Naive thymus-derived CD4-positive, alpha-beta T cell (primary cell): ENCODE measurements at regions of chr1 and their contacts with region 1.

Region 1: DNA sequence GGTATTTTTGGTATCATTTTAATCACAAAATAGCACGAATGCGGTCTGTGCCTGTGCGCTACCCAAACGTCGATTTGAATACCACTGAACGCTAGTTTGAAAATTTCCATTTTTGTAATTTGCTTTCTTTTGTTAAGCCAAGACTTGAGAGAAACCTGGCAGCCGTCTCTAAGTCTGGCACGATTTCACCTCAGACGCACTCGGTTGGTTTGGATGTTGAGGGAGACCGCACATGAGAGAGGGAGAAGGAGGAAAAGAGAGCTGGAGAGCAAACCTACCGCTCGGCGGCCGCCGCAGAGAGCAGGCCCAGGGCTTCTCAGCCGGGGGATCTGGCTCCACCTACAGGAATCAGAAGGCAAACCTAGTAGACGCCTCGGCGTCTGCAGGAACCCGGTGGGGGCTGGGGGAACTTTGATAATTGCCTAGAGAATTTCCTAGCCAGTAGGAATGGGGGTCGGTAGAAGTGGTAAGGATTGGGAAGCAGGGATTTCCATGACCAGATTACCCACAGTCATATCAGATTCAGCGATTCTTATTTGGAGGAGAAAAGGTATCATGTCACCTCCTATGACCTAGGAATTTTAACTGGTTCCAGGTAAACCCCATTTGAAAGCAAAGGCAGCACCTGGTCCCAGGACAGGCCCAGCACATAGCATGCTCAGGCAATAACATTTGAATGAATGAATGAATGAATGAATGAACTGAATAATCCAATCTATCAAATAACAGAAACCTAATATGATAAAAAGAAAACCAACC is 83.2 kb downstream of the TM2D1 start:
- DNase-seq: peak; percentile 41 to 72 (median 53)
- ATAC-seq: peak; percentile 93
- H3K4me3 ChIP-seq: peak overlapping the region; percentile 36
- H3K4me3 Mint-ChIP-seq: peak overlapping the region; percentile 47 to 92 (median 84)
- H3K27ac ChIP-seq: no peak overlapping the region
- H3K27ac Mint-ChIP-seq: peak overlapping the region in 6 of 9 donors; percentile 69 to 91 (median 82)
- H3K4me1 ChIP-seq: peaks cover 0 to 7% of the 10 kb centered on the region in 2 donors
- H3K4me1 Mint-ChIP-seq: peaks cover 5 to 20% (median 15%) of the 10 kb centered on the region in 7 donors
- H3K27me3 ChIP-seq: no peaks in the 10 kb centered on the region
- H3K27me3 Mint-ChIP-seq: peaks cover 0 to 7% (median 0%) of the 10 kb centered on the region in 5 donors

Region 2: DNA sequence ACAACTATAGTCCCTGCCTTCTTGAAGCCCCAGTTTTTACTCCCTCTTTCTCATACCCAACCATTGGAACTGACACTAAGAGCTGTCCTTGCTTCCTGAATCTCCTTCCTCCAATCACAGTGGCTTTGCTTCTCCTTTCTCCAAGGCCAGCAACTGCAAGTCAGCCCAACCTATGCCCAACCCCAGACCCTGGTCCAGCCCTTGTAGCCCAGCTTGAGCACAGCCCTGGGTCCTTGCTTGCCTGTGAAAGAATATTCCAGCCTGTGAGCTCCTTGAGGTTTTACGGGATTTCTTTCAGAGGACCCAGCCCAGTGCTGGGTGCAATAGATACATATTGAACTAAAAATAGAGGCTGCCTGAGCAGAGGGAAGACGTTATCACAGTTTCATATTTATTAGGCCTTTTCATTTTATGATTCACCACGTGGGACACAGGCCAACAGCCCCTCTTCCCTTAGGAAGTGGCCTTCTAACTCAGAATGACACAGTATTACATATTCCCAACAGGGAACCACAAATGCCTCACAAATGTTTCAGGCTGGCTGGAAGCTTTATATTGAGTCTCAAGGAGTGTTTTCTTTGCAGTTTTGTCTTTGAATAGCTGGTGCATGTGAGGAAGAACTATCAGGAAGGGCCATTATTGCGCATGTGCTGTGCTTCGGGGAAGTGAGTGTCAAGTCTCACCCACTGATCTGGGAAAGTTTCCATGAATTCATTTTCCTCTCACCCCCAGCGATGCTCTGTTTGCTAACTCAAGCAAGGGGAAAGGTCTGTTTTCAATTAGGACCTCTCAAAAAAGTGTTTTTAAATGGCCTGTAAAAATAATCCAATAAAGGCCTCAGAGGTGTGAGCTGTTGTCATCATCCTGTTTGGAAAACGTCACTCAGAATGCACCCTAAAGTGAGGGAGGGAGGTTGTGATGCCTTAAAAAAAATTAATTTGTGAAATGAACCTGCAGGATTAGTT is 651.7 kb before region 1 on chr1:
- CTCF ChIA-PET with region 1: no interaction called
- POLR2A ChIA-PET with region 1: no interaction called
- intact Hi-C with region 1: loop called in 1 of 2 experiments (anchors 10 kb)
- DNase-seq: no peak
- ATAC-seq: no peak
- H3K4me3 ChIP-seq: no peak overlapping the region
- H3K4me3 Mint-ChIP-seq: no peak overlapping the region
- H3K27ac ChIP-seq: no peak overlapping the region
- H3K27ac Mint-ChIP-seq: no peak overlapping the region
- H3K4me1 ChIP-seq: no peaks in the 10 kb centered on the region
- H3K4me1 Mint-ChIP-seq: no peaks in the 10 kb centered on the region
- H3K27me3 ChIP-seq: no peaks in the 10 kb centered on the region
- H3K27me3 Mint-ChIP-seq: peaks cover 0 to 10% (median 0%) of the 10 kb centered on the region in 5 donors

Region 3: GRCh38 chr1:61588736-61589672 is 52.8 kb before region 1 on chr1:
- CTCF ChIA-PET with region 1: interaction called, 3 read pairs
- POLR2A ChIA-PET with region 1: no interaction called
- intact Hi-C with region 1: loop called in 1 of 2 experiments (anchors 1 kb)
- DNase-seq: peak in 8 of 9 donors; percentile 7 to 53 (median 46)
- ATAC-seq: peak; percentile 74
- H3K4me3 ChIP-seq: no peak overlapping the region
- H3K4me3 Mint-ChIP-seq: no peak overlapping the region
- H3K27ac ChIP-seq: no peak overlapping the region
- H3K27ac Mint-ChIP-seq: no peak overlapping the region
- H3K4me1 ChIP-seq: no peaks in the 10 kb centered on the region
- H3K4me1 Mint-ChIP-seq: peaks cover 0 to 3% (median 0%) of the 10 kb centered on the region in 7 donors
- H3K27me3 ChIP-seq: no peaks in the 10 kb centered on the region
- H3K27me3 Mint-ChIP-seq: peaks cover 0 to 10% (median 8%) of the 10 kb centered on the region in 5 donors

Region 4: DNA sequence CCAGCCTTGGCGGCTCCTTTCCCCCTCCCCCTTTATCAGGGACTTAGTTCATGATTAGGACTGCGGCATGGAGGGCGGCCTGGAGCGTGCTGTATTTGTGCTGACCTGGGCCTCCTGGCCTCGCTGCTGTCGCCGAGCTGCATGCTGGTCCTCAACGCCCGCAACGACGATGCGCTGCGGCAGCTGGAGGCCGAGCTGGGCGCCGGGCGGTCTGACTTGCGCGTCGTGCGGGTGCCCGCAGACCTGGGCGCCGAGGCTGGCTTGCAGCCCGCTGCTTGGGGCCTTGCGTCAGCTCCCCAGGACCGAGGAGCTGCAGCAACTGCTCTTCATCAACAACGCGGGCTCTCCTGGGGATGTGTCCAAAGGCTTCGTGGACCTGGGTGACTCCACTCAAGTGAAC is 12.3 kb after region 1 on chr1:
- CTCF ChIA-PET with region 1: no interaction called
- POLR2A ChIA-PET with region 1: no interaction called
- intact Hi-C with region 1: loop called in 1 of 2 experiments (anchors 1 kb)
- DNase-seq: no peak
- ATAC-seq: no peak
- H3K4me3 ChIP-seq: no peak overlapping the region
- H3K4me3 Mint-ChIP-seq: no peak overlapping the region
- H3K27ac ChIP-seq: no peak overlapping the region
- H3K27ac Mint-ChIP-seq: no peak overlapping the region
- H3K4me1 ChIP-seq: no peaks in the 10 kb centered on the region
- H3K4me1 Mint-ChIP-seq: no peaks in the 10 kb centered on the region
- H3K27me3 ChIP-seq: no peaks in the 10 kb centered on the region
- H3K27me3 Mint-ChIP-seq: peaks cover 0 to 9% (median 0%) of the 10 kb centered on the region in 5 donors